Calu3 (cell line): ENCODE measurements at regions of chr14 and their contacts with region 1.

Region 1: DNA sequence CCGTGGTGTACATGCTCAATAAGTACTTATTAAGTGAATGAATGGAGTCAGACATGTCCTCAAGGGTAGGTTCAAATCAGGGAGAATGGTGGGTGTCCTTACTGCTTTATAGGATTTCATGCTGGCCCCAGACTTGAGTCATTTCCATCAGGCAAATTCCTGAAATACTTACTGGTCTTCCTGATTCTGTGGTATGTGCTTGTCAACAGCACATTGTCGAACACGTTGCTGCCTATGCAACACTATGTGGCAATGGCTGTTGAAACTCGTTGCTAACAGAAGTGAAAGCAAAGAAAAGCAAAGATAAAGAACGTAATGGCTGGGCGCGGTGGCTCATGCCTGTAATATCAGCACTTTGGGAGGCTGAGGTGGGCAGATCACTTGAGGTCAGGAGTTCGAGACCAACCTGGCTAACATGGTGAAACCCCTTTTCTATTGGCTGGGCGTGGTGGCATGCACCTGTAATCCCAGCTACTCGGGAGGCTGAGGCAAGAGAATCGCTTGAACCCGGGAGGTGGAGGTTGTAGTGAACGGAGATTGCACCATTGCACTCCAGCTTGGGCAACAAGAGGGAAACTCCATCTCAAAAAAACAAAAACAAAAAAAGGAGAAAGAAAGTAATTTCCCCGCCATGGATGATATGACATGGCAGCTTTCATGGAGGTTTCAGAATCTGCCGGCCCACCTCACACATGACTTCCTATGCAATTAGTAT is 214.9 kb downstream of the ZFP36L1 start:
- DNase-seq: peak; percentile 75
- H3K4me3 Mint-ChIP-seq: no peak overlapping the region
- H3K27ac Mint-ChIP-seq: peak overlapping the region; percentile 98
- H3K4me1 Mint-ChIP-seq: peaks cover 45% of the 10 kb centered on the region
- H3K27me3 Mint-ChIP-seq: no peaks in the 10 kb centered on the region
- CTCF ChIP-seq: no peak

Region 2: DNA sequence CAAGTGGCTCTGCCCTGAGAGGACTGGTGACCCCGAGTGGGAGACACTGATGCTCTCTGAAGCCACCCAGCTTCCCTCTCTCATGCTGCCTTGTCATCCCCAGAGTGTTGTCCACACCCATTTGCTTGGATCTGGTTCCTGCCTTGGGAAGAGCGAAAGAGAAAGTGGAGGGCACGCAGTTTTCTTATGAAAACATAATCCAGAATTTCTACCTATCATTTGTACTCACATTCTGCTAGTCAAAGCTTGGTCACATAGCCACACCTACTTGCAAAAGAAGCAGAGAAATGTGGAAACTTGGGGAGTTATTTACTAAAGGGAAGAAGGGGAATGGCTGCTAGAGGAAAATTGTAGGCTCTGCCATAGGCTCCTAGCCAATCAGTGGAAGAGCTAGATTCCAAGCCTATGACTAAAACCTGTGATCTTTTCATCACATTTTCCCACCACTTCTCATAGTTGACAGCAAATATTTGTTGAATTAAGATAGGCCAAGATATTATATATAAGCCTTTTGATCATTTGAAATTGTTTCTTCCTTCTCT is 111.4 kb before region 1 on chr14:
- CTCF ChIA-PET with region 1: no interaction called
- intact Hi-C with region 1: loop called (anchors 5 kb)
- DNase-seq: peak; percentile 33
- H3K4me3 Mint-ChIP-seq: no peak overlapping the region
- H3K27ac Mint-ChIP-seq: no peak overlapping the region
- H3K4me1 Mint-ChIP-seq: peaks cover 48% of the 10 kb centered on the region
- H3K27me3 Mint-ChIP-seq: no peaks in the 10 kb centered on the region
- CTCF ChIP-seq: no peak

Region 3: DNA sequence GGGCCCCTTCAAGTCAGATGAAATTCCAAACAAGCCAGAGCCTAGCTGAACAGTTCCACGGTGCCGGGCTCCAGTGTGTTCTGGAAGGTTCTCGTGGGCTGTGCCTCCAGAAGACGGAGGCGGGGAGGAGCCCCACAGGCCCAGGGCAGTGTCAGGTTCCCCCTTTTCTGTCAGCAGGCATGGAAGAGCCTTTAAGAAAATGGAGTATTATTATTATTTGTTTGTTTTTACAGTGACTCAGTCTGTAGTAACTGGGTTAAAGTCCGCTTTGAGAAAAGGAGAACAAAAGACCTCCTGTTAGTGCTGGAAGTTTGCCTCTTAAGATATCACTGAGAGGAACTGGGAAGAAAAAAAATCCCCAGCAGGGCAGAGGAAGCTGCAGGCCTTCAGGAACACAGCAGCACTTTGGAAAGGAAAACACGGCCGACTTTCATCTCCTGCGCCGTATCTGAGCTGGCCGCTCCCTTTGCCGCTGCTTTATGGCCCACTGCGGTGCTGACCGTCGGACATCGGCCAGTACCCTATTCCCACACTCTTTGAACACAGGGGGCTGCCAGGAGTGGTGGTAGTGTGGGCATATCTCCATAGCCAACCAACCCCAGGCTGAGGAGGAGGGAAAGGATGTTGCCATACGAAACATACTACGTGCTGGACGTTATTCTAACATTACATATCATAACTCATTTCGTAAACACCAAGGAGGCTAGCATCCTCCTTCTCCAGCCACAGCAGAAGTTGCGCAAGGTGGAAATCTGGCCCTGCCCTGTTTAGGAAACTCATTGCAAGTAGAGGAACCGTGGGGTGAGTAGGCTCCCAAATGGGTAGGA is 20.9 kb after region 1 on chr14:
- CTCF ChIA-PET with region 1: no interaction called
- intact Hi-C with region 1: loop called (anchors 2 kb)
- DNase-seq: peak; percentile 70
- H3K4me3 Mint-ChIP-seq: peak overlapping the region; percentile 62
- H3K27ac Mint-ChIP-seq: peak overlapping the region; percentile 96
- H3K4me1 Mint-ChIP-seq: peaks cover 52% of the 10 kb centered on the region
- H3K27me3 Mint-ChIP-seq: no peaks in the 10 kb centered on the region
- CTCF ChIP-seq: no peak